Right ventricle myocardium inferior (tissue), 1 donor: ENCODE measurements at regions of chr12 and their contacts with region 1.

Region 1: GRCh38 chr12:8544295-8544694 is 3.6 kb upstream of the CLEC4E start:
- DNase-seq: no peak
- ATAC-seq: no peak

Region 2: GRCh38 chr12:8562310-8562709 is 18.0 kb after region 1 on chr12:
- intact Hi-C with region 1: no loop called
- DNase-seq: no peak
- ATAC-seq: no peak

Region 3: DNA sequence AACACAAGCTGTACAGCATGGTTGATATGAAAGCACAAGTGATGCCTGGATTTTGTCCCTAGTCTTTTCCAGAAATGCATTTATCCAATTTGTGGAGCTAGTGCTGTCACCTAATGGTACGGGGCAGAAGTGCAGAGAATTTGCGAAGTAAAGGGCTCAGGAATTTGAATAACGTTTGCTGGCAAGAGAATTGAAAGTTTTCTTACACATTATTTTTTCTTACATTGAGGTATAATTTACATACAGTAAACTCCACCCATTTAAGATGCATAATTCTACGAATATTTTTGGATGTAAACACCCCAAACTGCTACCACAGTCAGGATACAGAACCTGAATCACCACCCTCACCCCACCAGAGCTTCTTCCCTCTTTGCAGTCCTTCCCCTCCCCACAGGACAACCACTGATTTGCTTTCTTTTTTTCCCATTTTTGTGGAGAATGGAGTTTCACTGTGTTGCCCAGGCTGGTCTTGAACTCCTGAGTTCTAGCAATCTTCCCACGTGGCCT is 64.8 kb after region 1 on chr12:
- intact Hi-C with region 1: loop called (anchors 2 kb)
- DNase-seq: no peak
- ATAC-seq: no peak

Region 4: DNA sequence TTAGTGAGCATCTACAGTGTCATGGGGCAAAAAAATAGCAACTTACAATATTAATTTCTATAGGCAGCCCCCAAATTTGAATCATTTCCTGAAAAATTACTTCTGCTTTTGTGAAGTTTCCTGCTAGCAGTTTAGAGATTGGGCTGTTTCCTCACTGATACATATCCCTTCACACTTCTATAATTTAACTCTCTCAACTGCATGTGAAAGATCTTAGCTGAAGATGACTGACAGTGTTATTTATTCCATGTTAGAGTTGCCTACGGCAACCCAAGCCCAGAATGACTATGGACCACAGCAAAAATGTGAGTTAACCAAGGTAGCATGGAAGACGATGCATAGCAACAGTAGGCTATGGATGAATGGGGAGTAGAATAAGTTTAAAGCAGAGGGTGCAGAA is 445.1 kb after region 1 on chr12 and contains the start of gene KLRG1:
- intact Hi-C with region 1: no loop called
- DNase-seq: no peak
- ATAC-seq: no peak
- total RNA-seq, gene KLRG1: 5.8 TPM